Left lung (tissue), 14 donors: ENCODE measurements at regions of chr4 and their contacts with region 1.

Region 1: GRCh38 chr4:94127707-94128328 is 79.8 kb upstream of the SMARCAD1 start:
- DNase-seq: peak in 2 of 4 donors; percentile 11 to 24
- ATAC-seq: peak; percentile 71
- H3K4me3 ChIP-seq: no peak overlapping the region
- H3K27ac ChIP-seq: no peak overlapping the region
- H3K4me1 ChIP-seq: no peaks in the 10 kb centered on the region
- H3K27me3 ChIP-seq: peaks cover 0 to 8% of the 10 kb centered on the region in 2 donors
- CTCF ChIP-seq: peak in 1 of 2 donors; percentile 68

Region 2: GRCh38 chr4:93791570-93792195 is 336.1 kb before region 1 on chr4:
- intact Hi-C with region 1: loop called in 1 of 2 experiments (anchors 10 kb)
- DNase-seq: peak in 2 of 4 donors; percentile 46 to 67
- ATAC-seq: peak; percentile 88
- H3K4me3 ChIP-seq: no peak overlapping the region
- H3K27ac ChIP-seq: no peak overlapping the region
- H3K4me1 ChIP-seq: no peaks in the 10 kb centered on the region
- H3K27me3 ChIP-seq: no peaks in the 10 kb centered on the region
- CTCF ChIP-seq: peak; percentile 65 to 66

Region 3: GRCh38 chr4:93983140-93983539 is 144.7 kb before region 1 on chr4:
- intact Hi-C with region 1: no loop called
- DNase-seq: no peak
- ATAC-seq: no peak
- H3K4me3 ChIP-seq: no peak overlapping the region
- H3K27ac ChIP-seq: no peak overlapping the region
- H3K4me1 ChIP-seq: no peaks in the 10 kb centered on the region
- H3K27me3 ChIP-seq: no peaks in the 10 kb centered on the region
- CTCF ChIP-seq: no peak

Region 4: DNA sequence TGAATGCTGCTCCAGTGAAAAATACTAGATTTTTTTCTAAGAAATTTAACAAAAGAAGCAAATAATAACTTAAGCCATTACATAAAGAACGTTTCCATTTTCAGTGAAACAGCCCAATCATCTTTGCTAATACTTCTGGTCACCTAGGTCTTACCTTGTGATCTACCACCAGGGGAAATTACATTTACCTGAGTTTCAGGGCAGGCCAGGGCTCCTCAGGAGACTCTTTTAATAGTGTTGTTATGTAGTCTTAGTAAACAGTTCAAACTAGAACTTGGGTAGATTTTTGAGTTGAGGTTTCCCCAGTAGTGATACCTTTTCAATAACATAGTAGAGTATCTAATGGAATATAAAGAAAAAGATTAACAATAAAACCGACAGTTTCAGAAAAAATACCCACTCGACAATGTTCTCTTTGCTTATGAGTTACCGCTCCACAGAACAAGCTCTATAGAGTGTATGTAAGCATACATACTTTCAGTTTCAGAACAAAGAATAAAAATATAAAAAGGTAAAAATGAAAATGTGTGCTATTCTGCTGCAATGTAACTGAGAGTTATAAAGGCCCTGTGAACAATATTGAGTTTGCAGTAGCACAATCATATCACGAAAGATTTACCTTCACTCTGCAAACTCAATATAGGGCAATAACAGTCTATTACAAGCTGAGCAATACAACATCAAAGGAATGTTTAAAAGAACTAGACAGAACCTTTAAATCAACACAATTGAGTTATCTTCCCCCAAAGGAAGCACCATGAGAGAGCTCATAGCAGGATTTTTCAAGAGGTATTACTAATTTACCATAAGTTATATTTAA is 133.4 kb before region 1 on chr4:
- intact Hi-C with region 1: no loop called
- DNase-seq: no peak
- ATAC-seq: no peak
- H3K4me3 ChIP-seq: no peak overlapping the region
- H3K27ac ChIP-seq: no peak overlapping the region
- H3K4me1 ChIP-seq: no peaks in the 10 kb centered on the region
- H3K27me3 ChIP-seq: no peaks in the 10 kb centered on the region
- CTCF ChIP-seq: no peak

Region 5: DNA sequence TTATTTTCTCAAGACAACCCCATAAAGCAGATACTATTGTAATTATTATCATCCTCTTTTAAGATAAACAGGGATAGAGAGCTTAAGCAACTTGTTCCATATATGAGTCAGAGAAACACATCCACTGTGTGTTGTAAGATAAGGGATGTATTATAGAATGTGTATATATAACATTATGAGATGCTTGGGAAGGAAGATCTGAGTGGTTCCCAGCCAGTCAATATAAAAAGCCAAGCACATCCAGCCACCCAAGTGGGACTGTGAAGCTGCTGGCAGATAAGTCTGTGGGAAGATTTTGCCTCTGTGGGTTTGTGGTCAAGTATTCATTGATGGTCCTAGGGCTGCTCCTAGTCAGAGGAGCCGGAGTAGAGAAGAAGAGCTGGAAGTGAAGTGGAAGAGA is 613.5 kb after region 1 on chr4:
- intact Hi-C with region 1: no loop called
- DNase-seq: no peak
- ATAC-seq: no peak
- H3K4me3 ChIP-seq: no peak overlapping the region
- H3K27ac ChIP-seq: no peak overlapping the region
- H3K4me1 ChIP-seq: no peaks in the 10 kb centered on the region
- H3K27me3 ChIP-seq: no peaks in the 10 kb centered on the region
- CTCF ChIP-seq: no peak

Region 6: DNA sequence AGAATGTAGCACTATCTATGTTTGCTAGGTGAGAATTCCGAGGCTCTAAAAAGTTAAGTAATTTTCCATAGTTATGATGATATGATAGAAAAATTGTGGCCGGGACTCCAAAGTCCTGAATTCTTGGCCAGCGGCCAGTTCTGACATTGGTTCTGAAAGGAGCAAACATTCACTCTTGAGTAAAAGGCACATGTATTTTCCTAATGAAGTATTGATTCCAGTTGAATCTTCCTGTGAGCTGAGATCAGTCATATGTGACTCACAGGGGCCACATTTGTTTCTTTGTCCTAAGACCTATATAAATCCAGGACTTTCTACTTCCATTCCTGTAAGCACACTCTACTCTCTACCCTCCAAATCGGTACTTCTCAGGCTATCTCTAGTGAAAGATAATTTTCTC is 979.8 kb after region 1 on chr4:
- intact Hi-C with region 1: no loop called
- DNase-seq: no peak
- ATAC-seq: no peak
- H3K4me3 ChIP-seq: no peak overlapping the region
- H3K27ac ChIP-seq: no peak overlapping the region
- H3K4me1 ChIP-seq: no peaks in the 10 kb centered on the region
- H3K27me3 ChIP-seq: no peaks in the 10 kb centered on the region
- CTCF ChIP-seq: no peak